ENCODE measurements at regions of chr5 and their contacts with region 1.

Region 1: GRCh38 chr5:32709781-32710549 is 1.2 kb upstream of the NPR3 start:
- DNase-seq: peak; percentile 56
- H3K4me3 Mint-ChIP-seq: peak overlapping the region; percentile 80
- H3K27ac Mint-ChIP-seq: no peak overlapping the region
- H3K4me1 Mint-ChIP-seq: peaks cover 19% of the 10 kb centered on the region
- H3K27me3 Mint-ChIP-seq: peaks cover 58% of the 10 kb centered on the region

Region 2: DNA sequence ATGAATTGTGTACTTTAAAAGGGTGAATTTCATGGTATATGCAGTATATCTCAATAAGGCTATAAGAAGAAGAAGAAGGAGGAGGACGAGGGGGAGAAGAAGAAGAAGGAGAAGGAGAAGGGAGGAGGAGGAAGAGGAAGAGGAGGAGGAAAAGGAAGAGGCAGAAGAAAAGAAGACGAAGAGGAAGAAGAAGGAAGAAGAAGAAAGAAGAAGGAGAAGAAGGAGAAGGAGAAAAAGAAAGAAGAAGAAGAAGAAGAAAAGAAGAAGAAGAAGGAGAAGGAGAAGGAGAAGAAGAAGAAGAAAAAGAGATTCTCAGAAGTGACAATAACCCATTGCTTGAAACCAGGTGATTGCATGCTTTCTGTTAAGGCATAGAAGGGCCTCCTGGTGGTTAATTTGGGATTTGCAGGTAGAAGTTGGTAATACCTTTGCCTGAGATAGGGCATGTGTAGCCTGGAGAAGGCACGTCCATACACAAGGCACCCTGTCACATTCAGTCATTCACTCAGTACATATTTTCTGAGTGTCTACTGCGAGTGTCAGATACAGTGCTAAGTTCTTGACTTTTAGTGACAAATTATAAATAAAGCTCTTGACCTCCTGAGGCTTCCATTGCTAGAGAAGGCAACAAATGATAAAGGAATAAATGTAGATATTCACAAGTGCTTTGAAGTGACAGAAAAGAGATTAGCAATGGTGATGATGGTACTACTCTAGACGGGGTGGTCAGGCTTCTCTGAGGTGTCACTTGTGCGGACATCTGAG is 232.4 kb after region 1 on chr5:
- intact Hi-C with region 1: loop called (anchors 5 kb)
- DNase-seq: no peak
- H3K4me3 Mint-ChIP-seq: no peak overlapping the region
- H3K27ac Mint-ChIP-seq: no peak overlapping the region
- H3K4me1 Mint-ChIP-seq: no peaks in the 10 kb centered on the region
- H3K27me3 Mint-ChIP-seq: no peaks in the 10 kb centered on the region

Region 3: DNA sequence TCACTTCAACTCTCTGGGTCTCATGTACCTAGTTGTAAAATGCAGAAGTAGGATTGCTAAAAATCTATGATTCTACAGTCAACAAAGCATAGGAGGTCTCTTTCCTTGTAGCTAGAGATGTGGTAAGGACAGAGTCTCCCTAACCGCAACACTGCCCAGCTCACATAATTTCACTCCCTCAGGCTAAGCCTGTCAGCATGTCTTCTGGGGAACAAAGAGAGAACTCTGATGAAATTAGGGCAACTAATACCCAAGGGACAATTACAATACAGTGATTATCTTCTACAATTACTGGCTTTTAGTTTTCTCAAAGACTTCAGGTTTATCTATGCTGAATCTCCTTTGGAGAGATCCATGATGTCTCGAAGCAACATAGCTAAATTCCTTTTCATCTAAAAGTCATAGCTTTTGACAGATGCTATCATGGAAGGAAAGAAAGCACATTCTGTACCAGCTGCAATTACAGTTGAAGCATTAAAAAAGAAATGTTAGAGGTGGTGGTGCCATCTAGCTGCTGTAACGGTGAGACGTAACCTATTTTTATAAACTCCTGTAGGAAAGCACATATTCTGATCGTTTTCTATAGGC is 589.8 kb after region 1 on chr5:
- intact Hi-C with region 1: loop called (anchors 10 kb)
- DNase-seq: no peak
- H3K4me3 Mint-ChIP-seq: no peak overlapping the region
- H3K27ac Mint-ChIP-seq: no peak overlapping the region
- H3K4me1 Mint-ChIP-seq: peaks cover 5% of the 10 kb centered on the region
- H3K27me3 Mint-ChIP-seq: no peaks in the 10 kb centered on the region

Region 4: DNA sequence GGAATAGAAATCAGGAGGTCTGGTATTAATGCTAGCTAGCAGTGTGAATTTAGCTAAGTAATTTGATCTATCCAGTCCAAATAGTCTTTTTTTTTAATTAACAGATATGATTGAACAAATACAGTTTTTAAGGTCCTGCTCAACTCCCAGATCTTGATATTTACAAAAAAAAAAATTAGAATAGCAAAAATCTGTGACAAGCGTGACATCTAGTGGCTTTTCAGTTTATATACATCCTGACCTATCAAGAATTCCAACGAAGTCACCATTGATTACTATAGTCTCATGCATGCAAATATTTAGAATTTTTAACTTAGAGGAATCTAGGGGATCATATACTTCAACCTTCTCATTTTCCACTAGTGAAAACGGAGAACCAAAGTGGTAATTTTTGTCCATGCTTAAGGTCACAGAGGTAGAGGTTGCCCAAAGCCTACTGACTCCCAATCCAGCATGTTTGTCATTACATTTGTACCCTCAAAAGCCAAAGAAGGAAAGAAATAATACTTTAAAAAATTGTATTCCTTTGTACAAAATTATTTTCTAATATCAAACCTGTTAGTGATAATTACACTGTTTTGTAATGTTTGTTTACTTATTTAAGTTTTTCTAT is 713.2 kb after region 1 on chr5:
- intact Hi-C with region 1: loop called (anchors 1 kb)
- DNase-seq: no peak
- H3K4me3 Mint-ChIP-seq: no peak overlapping the region
- H3K27ac Mint-ChIP-seq: no peak overlapping the region
- H3K4me1 Mint-ChIP-seq: no peaks in the 10 kb centered on the region
- H3K27me3 Mint-ChIP-seq: peaks cover 6% of the 10 kb centered on the region

Region 5: DNA sequence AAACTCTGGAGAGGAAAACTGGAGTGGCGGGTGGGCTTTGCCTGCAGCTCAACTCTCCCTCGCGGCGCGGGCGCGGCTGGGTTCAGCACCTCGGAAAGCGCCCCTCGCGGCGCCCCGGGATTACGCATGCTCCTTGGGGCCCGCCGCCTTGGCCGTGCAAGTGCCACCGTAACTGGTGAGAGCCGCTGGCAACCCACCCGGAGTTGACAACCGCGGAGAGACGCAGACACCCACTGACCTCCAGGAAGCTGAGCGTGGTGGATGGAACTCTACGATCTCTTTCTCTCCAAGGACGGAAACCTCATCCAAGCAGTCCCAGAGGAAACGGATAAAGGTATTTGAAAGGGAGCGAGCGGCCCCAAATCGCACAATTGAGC is 1226.0 kb after region 1 on chr5:
- intact Hi-C with region 1: loop called (anchors 5 kb)
- DNase-seq: peak; percentile 45
- H3K4me3 Mint-ChIP-seq: no peak overlapping the region
- H3K27ac Mint-ChIP-seq: no peak overlapping the region
- H3K4me1 Mint-ChIP-seq: no peaks in the 10 kb centered on the region
- H3K27me3 Mint-ChIP-seq: peaks cover 50% of the 10 kb centered on the region